CD8-positive, alpha-beta T cell (primary cell): ENCODE measurements at regions of chr18 and their contacts with region 1.

Region 1: GRCh38 chr18:46173393-46174341 is 69.5 kb downstream of the HAUS1 start:
- DNase-seq: peak; percentile 89 to 95 (median 95)
- ATAC-seq: peak; percentile 88
- H3K4me3 ChIP-seq: peak overlapping the region; percentile 85 to 100
- H3K4me3 Mint-ChIP-seq: peak overlapping the region; percentile 99
- H3K27ac ChIP-seq: peak overlapping the region; percentile 80 to 83
- H3K27ac Mint-ChIP-seq: peak overlapping the region; percentile 97
- H3K4me1 ChIP-seq: peaks cover 34% of the 10 kb centered on the region
- H3K4me1 Mint-ChIP-seq: peaks cover 38% of the 10 kb centered on the region
- H3K27me3 ChIP-seq: no peaks in the 10 kb centered on the region
- H3K27me3 Mint-ChIP-seq: no peaks in the 10 kb centered on the region
- CTCF ChIP-seq: peak; percentile 99

Region 2: GRCh38 chr18:46097801-46098615 is 75.7 kb before region 1 on chr18 and contains the start of gene ATP5F1A:
- CTCF ChIA-PET with region 1: interaction called, 11 read pairs
- POLR2A ChIA-PET with region 1: interaction called, 9 read pairs
- intact Hi-C with region 1: loop called (anchors 1 to 2 kb)
- DNase-seq: peak; percentile 67 to 93 (median 85)
- ATAC-seq: peak; percentile 83
- H3K4me3 ChIP-seq: peak within 1 kb of the TSS; percentile 60 to 95
- H3K4me3 Mint-ChIP-seq: peak within 1 kb of the TSS; percentile 98
- H3K27ac ChIP-seq: peak within 1 kb of the TSS; percentile 74 to 82
- H3K27ac Mint-ChIP-seq: peak within 1 kb of the TSS; percentile 98
- H3K4me1 ChIP-seq: peaks cover 33% of the 10 kb centered on the region
- H3K4me1 Mint-ChIP-seq: peaks cover 33% of the 10 kb centered on the region
- H3K27me3 ChIP-seq: no peaks in the 10 kb centered on the region
- H3K27me3 Mint-ChIP-seq: no peaks in the 10 kb centered on the region
- CTCF ChIP-seq: no peak
- total RNA-seq, gene ATP5F1A: 208 to 212 TPM

Region 3: DNA sequence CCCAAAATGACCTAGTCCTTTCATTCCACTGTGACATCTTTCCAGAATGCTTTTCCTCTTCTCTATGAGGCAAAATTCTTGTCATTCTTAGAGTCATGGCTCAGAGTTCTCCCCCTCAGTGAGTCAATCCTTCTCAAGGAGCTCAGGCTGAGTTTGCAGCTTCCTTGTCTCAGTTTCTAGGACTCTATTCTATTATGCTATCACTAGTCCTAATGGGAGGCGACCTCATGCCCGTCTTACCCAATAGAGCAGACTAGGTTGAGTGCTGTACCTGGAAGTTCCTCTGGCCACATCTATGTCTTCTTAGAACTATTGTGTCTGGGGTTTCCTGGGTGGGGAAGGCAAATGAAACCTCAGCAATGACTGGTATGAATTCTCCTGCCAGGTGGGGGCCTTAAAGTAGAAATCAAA is 18.0 kb before region 1 on chr18:
- CTCF ChIA-PET with region 1: interaction called, 29 read pairs
- POLR2A ChIA-PET with region 1: interaction called, 7 read pairs
- intact Hi-C with region 1: loop called in 1 of 2 experiments (anchors 2 kb)
- DNase-seq: peak in 8 of 9 experiments; percentile 10 to 70 (median 36)
- ATAC-seq: peak; percentile 89
- H3K4me3 ChIP-seq: peak overlapping the region in 1 of 2 experiments; percentile 2
- H3K4me3 Mint-ChIP-seq: peak overlapping the region; percentile 74
- H3K27ac ChIP-seq: peak overlapping the region; percentile 45 to 77
- H3K27ac Mint-ChIP-seq: peak overlapping the region; percentile 96
- H3K4me1 ChIP-seq: peaks cover 77% of the 10 kb centered on the region
- H3K4me1 Mint-ChIP-seq: peaks cover 73% of the 10 kb centered on the region
- H3K27me3 ChIP-seq: no peaks in the 10 kb centered on the region
- H3K27me3 Mint-ChIP-seq: no peaks in the 10 kb centered on the region
- CTCF ChIP-seq: no peak

Region 4: GRCh38 chr18:46199515-46200147 is 26.0 kb after region 1 on chr18:
- CTCF ChIA-PET with region 1: interaction called, 10 read pairs
- POLR2A ChIA-PET with region 1: interaction called, 3 read pairs
- intact Hi-C with region 1: loop called in 1 of 2 experiments (anchors 2 kb)
- DNase-seq: no peak
- ATAC-seq: no peak
- H3K4me3 ChIP-seq: no peak overlapping the region
- H3K4me3 Mint-ChIP-seq: no peak overlapping the region
- H3K27ac ChIP-seq: no peak overlapping the region
- H3K27ac Mint-ChIP-seq: peak overlapping the region; percentile 62
- H3K4me1 ChIP-seq: peaks cover 30% of the 10 kb centered on the region
- H3K4me1 Mint-ChIP-seq: peaks cover 70% of the 10 kb centered on the region
- H3K27me3 ChIP-seq: no peaks in the 10 kb centered on the region
- H3K27me3 Mint-ChIP-seq: no peaks in the 10 kb centered on the region
- CTCF ChIP-seq: no peak

Region 5: GRCh38 chr18:46239549-46239948 is 65.9 kb after region 1 on chr18:
- CTCF ChIA-PET with region 1: interaction called, 10 read pairs
- POLR2A ChIA-PET with region 1: no interaction called
- intact Hi-C with region 1: no loop called
- DNase-seq: no peak
- ATAC-seq: no peak
- H3K4me3 ChIP-seq: no peak overlapping the region
- H3K4me3 Mint-ChIP-seq: no peak overlapping the region
- H3K27ac ChIP-seq: no peak overlapping the region
- H3K27ac Mint-ChIP-seq: no peak overlapping the region
- H3K4me1 ChIP-seq: no peaks in the 10 kb centered on the region
- H3K4me1 Mint-ChIP-seq: peaks cover 54% of the 10 kb centered on the region
- H3K27me3 ChIP-seq: no peaks in the 10 kb centered on the region
- H3K27me3 Mint-ChIP-seq: no peaks in the 10 kb centered on the region
- CTCF ChIP-seq: no peak

Region 6: DNA sequence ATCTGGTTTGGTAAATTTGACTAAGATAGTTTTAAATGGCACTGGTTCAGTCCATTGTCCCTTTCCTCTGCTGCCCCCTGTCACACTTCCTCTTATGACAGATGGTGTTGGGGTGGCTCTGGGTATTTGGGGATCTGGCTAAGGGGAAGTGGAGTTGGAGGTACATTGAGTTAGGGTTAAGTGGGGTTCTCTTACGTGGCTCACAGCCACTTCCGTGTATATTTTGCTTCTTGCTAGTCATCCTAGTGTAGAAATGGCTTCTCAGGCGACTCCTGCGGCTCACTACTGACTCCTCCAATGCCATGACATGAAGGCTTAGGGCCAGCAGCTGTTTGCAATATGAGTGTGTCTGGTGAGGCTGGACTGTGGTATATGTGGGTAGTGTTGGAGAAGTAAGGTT is 117.5 kb after region 1 on chr18:
- CTCF ChIA-PET with region 1: interaction called, 5 read pairs
- POLR2A ChIA-PET with region 1: no interaction called
- intact Hi-C with region 1: loop called in 1 of 2 experiments (anchors 1 kb)
- DNase-seq: peak in 1 of 9 experiments; percentile 25
- ATAC-seq: no peak
- H3K4me3 ChIP-seq: no peak overlapping the region
- H3K4me3 Mint-ChIP-seq: no peak overlapping the region
- H3K27ac ChIP-seq: no peak overlapping the region
- H3K27ac Mint-ChIP-seq: no peak overlapping the region
- H3K4me1 ChIP-seq: no peaks in the 10 kb centered on the region
- H3K4me1 Mint-ChIP-seq: no peaks in the 10 kb centered on the region
- H3K27me3 ChIP-seq: no peaks in the 10 kb centered on the region
- H3K27me3 Mint-ChIP-seq: no peaks in the 10 kb centered on the region
- CTCF ChIP-seq: no peak

Region 7: GRCh38 chr18:46660955-46661749 is 487.5 kb after region 1 on chr18:
- CTCF ChIA-PET with region 1: interaction called, 76 read pairs
- POLR2A ChIA-PET with region 1: interaction called, 8 read pairs
- intact Hi-C with region 1: loop called (anchors 1 kb)
- DNase-seq: no peak
- ATAC-seq: no peak
- H3K4me3 ChIP-seq: no peak overlapping the region
- H3K4me3 Mint-ChIP-seq: no peak overlapping the region
- H3K27ac ChIP-seq: no peak overlapping the region
- H3K27ac Mint-ChIP-seq: no peak overlapping the region
- H3K4me1 ChIP-seq: no peaks in the 10 kb centered on the region
- H3K4me1 Mint-ChIP-seq: no peaks in the 10 kb centered on the region
- H3K27me3 ChIP-seq: no peaks in the 10 kb centered on the region
- H3K27me3 Mint-ChIP-seq: peaks cover 9% of the 10 kb centered on the region
- CTCF ChIP-seq: no peak